PC-3 (cell line): ENCODE measurements at regions of chr17 and their contacts with region 1.

Region 1: DNA sequence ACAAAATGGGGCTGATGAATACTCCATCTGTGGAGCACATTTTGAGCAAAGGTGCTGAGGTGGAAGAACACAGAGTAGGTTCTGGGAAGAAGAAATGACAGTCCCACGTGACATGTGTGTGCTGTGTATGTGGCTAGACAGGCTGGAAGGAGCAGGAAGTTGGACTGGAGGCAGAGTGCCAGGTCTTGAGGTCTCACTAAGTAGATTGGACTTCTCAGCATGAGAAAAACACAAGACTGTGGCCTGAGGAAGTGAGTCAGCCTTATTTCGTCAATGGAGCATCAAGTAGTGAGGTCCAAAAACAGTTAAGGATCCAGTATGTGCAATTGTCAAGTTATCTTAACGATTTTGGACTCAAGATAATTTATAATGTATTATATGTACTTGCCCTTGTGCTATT is 736.5 kb downstream of the KCNJ2 start:
- DNase-seq: peak; percentile 85
- ATAC-seq: peak; percentile 75
- H3K4me3 ChIP-seq: no peak overlapping the region
- H3K27ac ChIP-seq: peak overlapping the region; percentile 34
- H3K4me1 ChIP-seq: peaks cover 10% of the 10 kb centered on the region; the same call in 1 of the 2 replicates
- H3K27me3 ChIP-seq: no peaks in the 10 kb centered on the region
- CTCF ChIP-seq: no peak

Region 2: GRCh38 chr17:69981441-69981840 is 924.4 kb before region 1 on chr17:
- CTCF ChIA-PET with region 1: no interaction called
- POLR2A ChIA-PET with region 1: interaction called, 17 read pairs
- intact Hi-C with region 1: no loop called
- DNase-seq: no peak
- ATAC-seq: no peak
- H3K4me3 ChIP-seq: no peak overlapping the region
- H3K27ac ChIP-seq: no peak overlapping the region
- H3K4me1 ChIP-seq: no peaks in the 10 kb centered on the region
- H3K27me3 ChIP-seq: no peaks in the 10 kb centered on the region
- CTCF ChIP-seq: no peak

Region 3: DNA sequence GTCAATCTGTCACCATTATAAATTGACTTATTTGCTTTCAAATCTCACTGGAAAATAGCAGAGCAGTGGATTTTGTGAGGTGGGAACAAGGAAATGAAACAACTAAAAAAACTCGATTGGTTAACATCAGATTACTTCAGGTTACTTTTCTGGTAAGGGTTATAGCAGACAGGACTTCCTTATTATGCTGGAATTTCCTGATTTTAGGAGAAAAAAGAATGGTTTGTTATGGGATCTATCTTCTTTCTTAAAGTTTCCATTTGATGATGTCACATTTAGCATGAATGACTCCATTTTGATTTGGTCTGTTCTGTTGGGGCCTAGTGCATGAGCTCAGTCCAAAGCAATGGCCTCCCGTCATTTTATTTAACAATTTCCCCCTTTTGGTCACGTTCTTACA is 525.9 kb before region 1 on chr17:
- CTCF ChIA-PET with region 1: no interaction called
- POLR2A ChIA-PET with region 1: no interaction called
- intact Hi-C with region 1: no loop called
- DNase-seq: no peak
- ATAC-seq: no peak
- H3K4me3 ChIP-seq: no peak overlapping the region
- H3K27ac ChIP-seq: no peak overlapping the region
- H3K4me1 ChIP-seq: no peaks in the 10 kb centered on the region
- H3K27me3 ChIP-seq: 0 out of 2 replicates have a peak, but pooled peaks cover 3% of the 10 kb centered on the region
- CTCF ChIP-seq: no peak

Region 4: GRCh38 chr17:71039391-71039790 is 133.6 kb after region 1 on chr17:
- CTCF ChIA-PET with region 1: no interaction called
- POLR2A ChIA-PET with region 1: no interaction called
- intact Hi-C with region 1: no loop called
- DNase-seq: no peak
- ATAC-seq: no peak
- H3K4me3 ChIP-seq: no peak overlapping the region
- H3K27ac ChIP-seq: no peak overlapping the region
- H3K4me1 ChIP-seq: no peaks in the 10 kb centered on the region
- H3K27me3 ChIP-seq: peaks cover 8% of the 10 kb centered on the region; the same call in 1 of the 2 replicates
- CTCF ChIP-seq: no peak